ENCODE measurements at regions of chr3 and their contacts with region 1.

Region 1: DNA sequence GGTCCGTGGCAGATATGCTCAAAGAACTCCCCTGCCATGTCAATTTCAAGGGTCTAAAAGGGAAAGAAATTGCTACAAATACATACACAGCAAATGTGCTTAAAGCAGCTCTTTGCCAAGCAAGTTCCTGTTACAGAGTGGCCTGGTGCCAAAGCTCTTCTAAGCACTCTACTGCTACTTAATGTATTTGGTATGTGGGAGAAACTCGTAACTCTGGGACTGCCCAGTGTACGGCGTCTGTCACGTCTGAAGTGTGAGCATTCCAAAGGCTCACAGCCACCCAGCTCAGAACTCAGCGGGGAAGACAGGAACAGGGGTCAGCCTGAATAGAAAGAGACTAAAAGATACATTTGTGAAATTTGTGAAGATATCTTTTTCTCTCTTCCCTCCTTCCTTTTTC is 54.6 kb downstream of the RBMS3 start:
- DNase-seq: peak; percentile 93
- H3K4me3 ChIP-seq: peak overlapping the region; percentile 19 to 32 (median 30)
- H3K27ac ChIP-seq: peak overlapping the region; percentile 94
- H3K4me1 ChIP-seq: peaks cover 48% of the 10 kb centered on the region
- H3K27me3 ChIP-seq: no peaks in the 10 kb centered on the region
- CTCF ChIP-seq: no peak

Region 2: DNA sequence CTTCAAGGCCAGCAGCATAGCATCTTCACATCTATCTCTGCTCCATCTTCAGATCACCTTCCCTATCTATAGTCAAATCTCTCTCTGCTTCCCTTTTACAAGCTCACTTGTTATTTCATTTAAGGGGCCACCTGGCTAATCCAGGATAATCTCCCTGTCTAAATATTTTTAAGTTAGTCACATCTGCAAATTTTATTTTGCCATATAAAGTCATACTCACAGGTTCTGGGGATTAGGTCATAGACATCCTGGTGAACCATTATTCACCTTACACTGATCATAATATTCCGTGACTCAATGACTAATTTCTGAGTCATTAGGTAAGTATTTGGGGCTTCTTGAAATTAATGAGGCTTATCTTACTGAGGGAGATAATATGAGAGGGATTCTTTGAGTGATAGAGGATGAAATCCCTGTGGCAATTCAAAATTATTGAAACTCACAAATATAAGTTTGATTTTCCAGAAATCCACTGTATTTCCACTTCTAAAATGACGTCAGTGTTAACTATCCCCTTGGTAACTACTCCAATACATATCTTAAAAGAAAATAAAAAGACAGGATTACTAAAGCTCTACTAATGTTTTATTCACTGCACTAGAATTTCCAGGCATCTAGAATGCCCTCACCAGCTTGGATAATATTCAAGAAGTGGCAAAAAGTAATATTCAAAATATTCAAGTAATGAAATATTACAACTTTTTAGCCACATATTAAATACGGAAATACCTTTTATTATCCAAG is 148.3 kb before region 1 on chr3:
- CTCF ChIA-PET with region 1: no interaction called
- dilution Hi-C with region 1: no loop called
- in situ Hi-C with region 1: no loop called
- intact Hi-C with region 1: loop called (anchors 5 kb)
- DNase-seq: peak; percentile 94
- H3K4me3 ChIP-seq: no peak overlapping the region
- H3K27ac ChIP-seq: peak overlapping the region; percentile 87
- H3K4me1 ChIP-seq: peaks cover 27% of the 10 kb centered on the region
- H3K27me3 ChIP-seq: no peaks in the 10 kb centered on the region
- CTCF ChIP-seq: no peak

Region 3: GRCh38 chr3:29291262-29291981 is 44.0 kb before region 1 on chr3:
- CTCF ChIA-PET with region 1: no interaction called
- dilution Hi-C with region 1: no loop called
- in situ Hi-C with region 1: no loop called
- intact Hi-C with region 1: loop called (anchors 2 kb)
- DNase-seq: peak; percentile 34
- H3K4me3 ChIP-seq: no peak overlapping the region
- H3K27ac ChIP-seq: peak overlapping the region; percentile 65
- H3K4me1 ChIP-seq: peaks cover 32% of the 10 kb centered on the region
- H3K27me3 ChIP-seq: no peaks in the 10 kb centered on the region
- CTCF ChIP-seq: no peak

Region 4: DNA sequence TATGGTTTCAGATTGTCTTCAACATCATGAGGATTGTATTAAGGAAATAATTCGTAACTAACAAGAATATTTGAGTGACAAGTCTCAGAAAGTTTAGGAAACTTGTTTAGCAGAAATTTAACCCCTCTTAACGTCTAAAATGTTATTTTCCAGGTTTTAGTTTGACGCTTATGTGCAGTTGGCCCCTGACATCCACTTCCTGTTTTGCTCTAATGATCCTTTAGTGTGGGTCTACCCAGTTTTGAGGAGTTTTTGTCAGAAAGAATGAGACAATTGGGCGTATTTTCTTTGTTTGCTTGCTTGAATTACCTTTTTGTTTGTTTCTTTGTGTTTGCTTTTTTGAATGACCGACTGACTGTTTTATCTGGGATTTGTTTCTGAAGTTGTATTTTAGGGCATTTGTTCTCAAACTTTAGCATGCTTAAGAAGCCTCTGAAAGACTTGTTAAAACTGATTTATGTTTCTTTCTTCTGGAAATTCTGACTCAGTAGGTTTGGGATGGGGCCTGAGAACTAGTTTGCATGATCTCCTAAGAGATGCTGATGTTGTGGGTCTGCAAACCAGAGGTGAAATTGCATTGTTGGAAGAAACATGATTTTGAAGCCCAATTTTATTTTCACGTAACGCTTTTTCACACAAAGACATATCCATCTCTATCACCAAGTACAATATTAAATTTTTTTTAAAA is 34.0 kb before region 1 on chr3:
- CTCF ChIA-PET with region 1: no interaction called
- dilution Hi-C with region 1: no loop called
- in situ Hi-C with region 1: no loop called
- intact Hi-C with region 1: no loop called
- DNase-seq: no peak
- H3K4me3 ChIP-seq: no peak overlapping the region
- H3K27ac ChIP-seq: no peak overlapping the region
- H3K4me1 ChIP-seq: no peaks in the 10 kb centered on the region
- H3K27me3 ChIP-seq: no peaks in the 10 kb centered on the region
- CTCF ChIP-seq: no peak

Region 5: DNA sequence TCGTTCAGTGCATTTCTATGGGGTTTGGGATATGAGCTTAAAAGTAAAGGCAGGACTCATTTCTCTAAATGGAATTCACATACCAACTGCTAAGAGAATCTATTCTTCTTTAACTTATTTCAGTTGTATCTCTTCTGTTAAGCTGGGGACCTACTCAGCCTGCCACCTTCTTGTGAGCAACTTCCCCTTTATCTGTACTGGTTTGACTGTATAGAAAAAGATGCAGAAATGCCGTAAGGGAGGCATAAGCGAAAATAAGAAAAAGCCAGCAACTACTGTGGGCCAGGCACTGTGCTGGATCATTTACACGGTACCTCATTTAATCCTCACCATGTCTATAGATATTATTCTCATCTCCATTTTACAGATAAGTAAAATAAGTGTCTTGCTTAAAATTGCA is 16.2 kb before region 1 on chr3:
- CTCF ChIA-PET with region 1: no interaction called
- dilution Hi-C with region 1: no loop called
- in situ Hi-C with region 1: no loop called
- intact Hi-C with region 1: loop called (anchors 1 kb)
- DNase-seq: no peak
- H3K4me3 ChIP-seq: peak overlapping the region in 1 of 3 experiments; percentile 26
- H3K27ac ChIP-seq: no peak overlapping the region
- H3K4me1 ChIP-seq: peaks cover 14% of the 10 kb centered on the region
- H3K27me3 ChIP-seq: no peaks in the 10 kb centered on the region
- CTCF ChIP-seq: no peak

Region 6: GRCh38 chr3:29412110-29412509 is 76.7 kb after region 1 on chr3:
- CTCF ChIA-PET with region 1: no interaction called
- dilution Hi-C with region 1: no loop called
- in situ Hi-C with region 1: no loop called
- intact Hi-C with region 1: loop called (anchors 5 kb)
- DNase-seq: no peak
- H3K4me3 ChIP-seq: no peak overlapping the region
- H3K27ac ChIP-seq: no peak overlapping the region
- H3K4me1 ChIP-seq: peaks cover 14% of the 10 kb centered on the region
- H3K27me3 ChIP-seq: no peaks in the 10 kb centered on the region
- CTCF ChIP-seq: no peak

Region 7: GRCh38 chr3:29759411-29760225 is 424.2 kb after region 1 on chr3:
- CTCF ChIA-PET with region 1: interaction called, 8 read pairs
- dilution Hi-C with region 1: no loop called
- in situ Hi-C with region 1: no loop called
- intact Hi-C with region 1: loop called (anchors 2 kb)
- DNase-seq: peak; percentile 78
- H3K4me3 ChIP-seq: no peak overlapping the region
- H3K27ac ChIP-seq: peak overlapping the region; percentile 89
- H3K4me1 ChIP-seq: peaks cover 40% of the 10 kb centered on the region
- H3K27me3 ChIP-seq: no peaks in the 10 kb centered on the region
- CTCF ChIP-seq: no peak

Measured in mammary epithelial cell (primary cell).